ENCODE measurements at regions of chr1 and their contacts with region 1.

Region 1: DNA sequence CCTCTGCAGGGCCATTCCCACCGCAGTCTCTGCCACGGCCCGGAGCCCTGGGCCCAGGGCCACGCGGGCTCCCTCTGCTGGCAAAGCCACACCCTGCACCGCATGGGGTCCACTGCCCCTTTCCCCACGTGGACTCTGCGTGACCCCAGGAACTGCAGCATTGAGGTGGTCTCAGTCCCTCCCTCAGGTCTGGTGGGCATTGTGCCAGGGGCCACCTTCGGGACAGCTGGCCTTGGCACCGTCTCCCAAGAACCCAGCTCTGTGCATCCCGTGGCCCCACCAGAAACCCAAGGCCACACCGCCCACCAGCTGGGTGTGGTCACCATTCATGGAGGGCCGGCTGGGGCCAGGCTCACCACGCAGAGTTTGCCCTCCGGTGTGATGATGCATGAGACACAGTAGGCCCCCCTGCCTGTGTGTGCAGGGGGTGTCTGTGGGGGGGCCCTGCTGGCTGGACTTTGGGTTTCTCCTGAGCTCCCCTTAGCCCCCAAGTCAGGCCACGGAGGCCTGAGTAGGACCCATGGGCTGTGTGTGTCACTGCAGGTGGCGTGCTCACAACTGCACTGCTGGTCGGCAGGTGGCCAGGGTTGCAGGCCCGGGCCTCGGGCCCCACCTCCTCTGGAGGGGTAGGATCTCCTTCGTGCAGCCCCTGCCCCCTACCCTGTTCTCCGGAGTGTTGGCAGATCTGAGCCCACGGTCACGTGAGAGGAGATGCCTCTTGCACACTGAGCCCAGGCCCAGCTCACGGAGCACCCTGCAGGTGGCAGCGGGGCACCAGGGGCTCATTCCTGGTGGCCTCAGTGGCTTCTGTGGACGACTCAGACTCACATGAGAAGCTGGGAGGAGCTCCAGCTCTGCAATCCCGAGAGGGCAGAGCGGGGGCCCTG is 5.8 kb downstream of the VWA1 start:
- DNase-seq: peak; percentile 65
- H3K4me3 Mint-ChIP-seq: no peak overlapping the region
- H3K27ac Mint-ChIP-seq: no peak overlapping the region
- H3K4me1 Mint-ChIP-seq: peaks cover 7% of the 10 kb centered on the region
- H3K27me3 Mint-ChIP-seq: peaks cover 13% of the 10 kb centered on the region

Region 2: GRCh38 chr1:1399187-1399871 is 41.9 kb before region 1 on chr1 and contains the start of gene CCNL2:
- CTCF ChIA-PET with region 1: interaction called, 21 read pairs
- POLR2A ChIA-PET with region 1: no interaction called
- intact Hi-C with region 1: no loop called
- DNase-seq: peak; percentile 100
- H3K4me3 Mint-ChIP-seq: peak within 1 kb of the TSS; percentile 89
- H3K27ac Mint-ChIP-seq: peak within 1 kb of the TSS; percentile 90
- H3K4me1 Mint-ChIP-seq: peaks cover 56% of the 10 kb centered on the region
- H3K27me3 Mint-ChIP-seq: no peaks in the 10 kb centered on the region
- total RNA-seq, gene CCNL2: 96.0 to 108 TPM

Region 3: DNA sequence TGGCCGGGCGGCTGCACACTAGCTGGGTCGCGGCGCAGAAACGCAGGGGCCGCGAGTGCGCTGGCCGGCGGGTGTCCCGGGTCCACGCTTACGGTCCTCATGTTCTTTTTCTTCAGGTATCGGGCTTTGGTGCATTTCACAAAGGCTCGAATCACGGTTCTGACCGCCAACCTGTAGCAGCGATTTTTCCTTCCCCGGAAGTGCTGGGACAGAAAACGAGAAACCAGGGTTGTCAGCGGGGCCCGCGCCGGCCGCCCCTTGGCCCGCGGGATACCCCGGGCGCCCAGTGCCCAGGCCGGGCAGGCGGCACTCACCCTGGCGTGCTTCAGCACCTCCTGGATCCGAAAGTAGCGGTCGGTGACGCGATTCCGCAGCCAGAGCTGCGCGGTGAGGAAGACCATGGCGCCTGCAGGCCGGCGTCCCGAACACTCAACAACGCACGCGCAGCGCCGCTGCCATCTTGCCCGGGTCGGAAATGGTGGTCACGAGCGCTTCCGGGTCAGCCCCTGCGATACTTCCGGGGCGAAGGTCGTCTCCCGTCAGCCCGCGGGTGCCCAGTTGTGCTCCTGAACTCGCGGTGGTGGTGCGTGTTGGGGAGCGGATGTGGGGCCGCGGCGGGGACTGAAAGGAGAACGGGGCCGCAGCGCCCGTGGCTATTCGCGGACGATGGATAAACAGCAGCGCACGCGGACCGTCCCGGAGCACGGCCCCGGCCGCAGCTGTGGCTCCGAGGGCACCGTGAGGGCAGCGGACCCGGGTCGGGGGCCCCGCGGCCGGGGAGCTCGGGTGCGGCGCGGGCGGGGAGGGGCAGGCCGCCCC is 34.2 kb before region 1 on chr1 and contains the start of gene MRPL20:
- CTCF ChIA-PET with region 1: interaction called, 11 read pairs
- POLR2A ChIA-PET with region 1: interaction called, 3 read pairs
- intact Hi-C with region 1: no loop called
- DNase-seq: peak; percentile 98
- H3K4me3 Mint-ChIP-seq: peak within 1 kb of the TSS; percentile 93
- H3K27ac Mint-ChIP-seq: peak within 1 kb of the TSS; percentile 94
- H3K4me1 Mint-ChIP-seq: peaks cover 48% of the 10 kb centered on the region
- H3K27me3 Mint-ChIP-seq: no peaks in the 10 kb centered on the region
- total RNA-seq, gene MRPL20: 122 to 123 TPM

Region 4: GRCh38 chr1:1430114-1430982 is 10.9 kb before region 1 on chr1:
- CTCF ChIA-PET with region 1: interaction called, 10 read pairs
- POLR2A ChIA-PET with region 1: no interaction called
- intact Hi-C with region 1: no loop called
- DNase-seq: no peak
- H3K4me3 Mint-ChIP-seq: no peak overlapping the region
- H3K27ac Mint-ChIP-seq: no peak overlapping the region
- H3K4me1 Mint-ChIP-seq: peaks cover 13% of the 10 kb centered on the region
- H3K27me3 Mint-ChIP-seq: peaks cover 27% of the 10 kb centered on the region